Activated CD8-positive, alpha-beta memory T cell treated with anti-CD3 and anti-CD28 coated beads, Interleukin-2, amount 10 ng/mL, durations not matched to agents 7 days and 5 days (primary cell): ENCODE measurements at regions of chr12 and their contacts with region 1.

Region 1: DNA sequence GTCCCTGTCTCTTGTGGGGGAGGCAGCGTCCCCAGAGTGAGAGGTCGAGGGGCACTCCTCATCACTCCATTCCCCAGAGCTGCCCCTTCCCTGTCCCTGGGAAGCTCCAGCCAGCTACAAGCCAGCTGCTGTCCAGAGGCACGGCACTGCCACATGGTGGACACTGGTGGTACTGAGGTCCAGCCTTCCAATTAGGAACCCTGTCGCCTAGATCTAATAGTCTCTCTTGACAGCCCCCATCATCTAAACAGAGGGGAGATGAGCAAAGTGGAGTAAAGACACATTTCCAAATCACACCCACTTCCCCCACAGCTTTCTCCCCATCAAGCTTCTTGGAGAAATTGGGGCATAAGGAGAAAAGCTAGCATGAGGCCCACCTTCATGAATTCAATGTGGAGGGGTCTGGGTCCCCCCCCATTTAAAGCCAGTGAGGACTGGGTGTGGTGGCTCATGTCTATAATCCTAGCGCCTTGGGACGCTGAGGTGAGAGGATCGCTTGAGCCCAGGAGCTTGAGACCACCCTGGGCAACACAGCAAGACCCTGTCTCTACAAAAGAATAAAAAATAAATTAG is 2.1 kb upstream of the INHBE start:
- DNase-seq: peak; percentile 75
- ATAC-seq: peak; percentile 69
- H3K4me3 Mint-ChIP-seq: no peak overlapping the region
- H3K27ac Mint-ChIP-seq: no peak overlapping the region
- H3K4me1 Mint-ChIP-seq: peaks cover 17% of the 10 kb centered on the region
- H3K27me3 Mint-ChIP-seq: no peaks in the 10 kb centered on the region

Region 2: DNA sequence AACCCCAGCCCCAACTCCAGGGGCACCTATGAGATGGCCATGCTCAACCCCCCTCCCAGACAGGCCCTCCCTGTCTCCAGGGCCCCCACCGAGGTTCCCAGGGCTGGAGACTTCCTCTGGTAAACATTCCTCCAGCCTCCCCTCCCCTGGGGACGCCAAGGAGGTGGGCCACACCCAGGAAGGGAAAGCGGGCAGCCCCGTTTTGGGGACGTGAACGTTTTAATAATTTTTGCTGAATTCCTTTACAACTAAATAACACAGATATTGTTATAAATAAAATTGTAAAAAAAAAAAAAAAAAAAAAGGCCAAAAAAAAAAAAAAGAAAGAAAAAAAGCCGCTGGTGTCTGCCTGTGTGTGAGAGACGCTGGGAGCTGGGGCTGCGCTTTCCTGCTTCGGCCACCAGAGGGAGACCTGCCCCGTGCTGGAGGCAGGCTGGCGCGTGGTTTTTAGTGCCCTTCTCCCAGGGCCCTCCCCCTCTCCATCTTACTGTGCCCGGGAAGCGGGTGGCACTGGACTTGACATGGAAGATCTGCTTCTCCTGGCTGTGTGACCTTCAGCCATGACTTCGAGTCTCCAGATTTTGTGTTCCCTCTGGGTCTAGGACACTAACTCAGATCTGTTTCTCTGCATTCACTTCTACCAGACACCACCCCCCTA is 239.8 kb before region 1 on chr12:
- CTCF ChIA-PET with region 1: interaction called, 17 read pairs
- DNase-seq: peak; percentile 89
- ATAC-seq: peak; percentile 57
- H3K4me3 Mint-ChIP-seq: no peak overlapping the region
- H3K27ac Mint-ChIP-seq: no peak overlapping the region
- H3K4me1 Mint-ChIP-seq: peaks cover 30% of the 10 kb centered on the region
- H3K27me3 Mint-ChIP-seq: peaks cover 41% of the 10 kb centered on the region

Region 3: GRCh38 chr12:57261428-57261865 is 191.6 kb before region 1 on chr12:
- CTCF ChIA-PET with region 1: interaction called, 87 read pairs
- DNase-seq: no peak
- ATAC-seq: no peak
- H3K4me3 Mint-ChIP-seq: no peak overlapping the region
- H3K27ac Mint-ChIP-seq: no peak overlapping the region
- H3K4me1 Mint-ChIP-seq: peaks cover 8% of the 10 kb centered on the region
- H3K27me3 Mint-ChIP-seq: no peaks in the 10 kb centered on the region

Region 4: DNA sequence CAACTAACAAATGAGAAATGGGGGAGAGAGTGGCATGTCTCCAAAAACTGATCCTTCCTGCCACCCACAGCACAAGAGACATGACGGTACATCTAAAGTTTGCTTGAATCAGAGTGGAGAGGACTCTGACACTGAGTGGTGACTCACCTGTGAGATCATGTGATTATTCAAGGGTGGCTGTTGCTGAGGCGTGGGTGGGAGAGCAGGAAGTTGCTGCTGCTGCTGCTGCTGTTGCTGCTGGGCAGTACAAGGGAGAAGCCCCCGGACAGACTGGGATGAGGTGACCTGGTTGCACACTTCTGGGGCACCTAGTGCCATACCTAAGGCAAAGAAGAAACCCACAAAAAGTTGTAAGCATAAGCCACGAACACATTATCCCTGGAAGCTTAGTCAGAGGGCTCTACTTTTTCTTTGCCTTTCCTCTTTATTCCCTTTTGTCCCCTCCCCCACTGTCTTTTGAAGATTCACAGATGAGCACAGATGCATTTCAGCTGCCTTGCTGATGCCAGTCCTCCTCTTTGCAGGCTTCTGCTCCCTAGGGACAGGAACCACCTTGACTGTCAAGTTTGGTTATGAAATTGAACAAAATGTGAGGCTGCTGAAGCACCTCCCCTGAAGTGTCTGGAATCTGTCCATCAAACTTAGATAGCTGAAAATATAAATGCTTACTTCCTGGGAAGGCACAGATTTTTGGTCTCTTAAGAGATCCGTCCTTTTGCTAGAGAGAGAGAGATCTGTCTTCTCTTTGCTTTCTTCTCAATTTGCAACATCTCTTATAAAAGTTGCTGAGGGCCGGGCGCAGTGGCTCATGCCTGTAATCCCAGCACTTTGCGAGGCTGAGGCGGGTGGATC is 172.6 kb before region 1 on chr12:
- CTCF ChIA-PET with region 1: interaction called, 10 read pairs
- DNase-seq: peak; percentile 87
- ATAC-seq: peak; percentile 100
- H3K4me3 Mint-ChIP-seq: peak overlapping the region; percentile 14
- H3K27ac Mint-ChIP-seq: peak overlapping the region; percentile 93
- H3K4me1 Mint-ChIP-seq: peaks cover 17% of the 10 kb centered on the region
- H3K27me3 Mint-ChIP-seq: no peaks in the 10 kb centered on the region

Region 5: GRCh38 chr12:57309420-57309819 is 143.6 kb before region 1 on chr12:
- CTCF ChIA-PET with region 1: interaction called, 91 read pairs
- DNase-seq: no peak
- ATAC-seq: peak; percentile 36
- H3K4me3 Mint-ChIP-seq: no peak overlapping the region
- H3K27ac Mint-ChIP-seq: peak overlapping the region; percentile 14
- H3K4me1 Mint-ChIP-seq: peaks cover 13% of the 10 kb centered on the region
- H3K27me3 Mint-ChIP-seq: no peaks in the 10 kb centered on the region

Region 6: DNA sequence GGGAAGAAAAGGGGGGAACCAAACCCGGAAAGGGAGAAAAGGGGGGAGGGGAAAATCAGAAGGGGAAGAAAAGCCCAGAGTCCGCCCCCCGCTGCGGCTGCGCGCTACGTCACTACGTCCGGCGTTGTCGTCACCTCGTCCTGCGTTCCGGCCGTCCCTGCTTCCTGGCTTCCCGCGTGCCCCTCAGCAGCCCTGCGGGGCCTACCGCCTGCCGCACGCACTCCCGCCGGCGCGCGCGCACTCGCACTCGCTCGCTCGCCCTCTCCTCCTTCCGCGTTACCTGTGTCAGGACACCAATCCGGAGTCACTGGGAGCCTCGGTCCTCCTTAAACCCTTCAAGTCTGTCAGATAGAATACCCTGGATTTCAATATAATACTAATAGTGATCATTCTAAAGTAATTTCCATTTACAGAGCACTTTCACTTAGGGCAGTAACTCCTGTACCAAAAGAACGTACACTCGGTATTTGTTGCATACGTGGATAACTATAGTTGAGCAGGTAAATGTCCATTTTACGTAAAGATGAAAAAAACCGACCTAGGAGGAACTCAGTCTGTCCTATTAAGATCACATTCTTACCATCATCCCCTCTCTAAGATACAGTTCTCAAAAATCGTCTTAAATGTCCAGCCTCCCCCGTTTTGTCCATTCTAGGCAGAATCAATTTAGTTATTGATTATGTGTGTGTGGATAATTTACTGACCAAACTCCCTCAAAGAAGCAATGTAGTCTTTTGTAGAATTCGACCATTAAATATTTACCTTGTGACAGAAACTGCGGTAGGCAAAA is 21.9 kb before region 1 on chr12 and contains the start of gene R3HDM2:
- CTCF ChIA-PET with region 1: interaction called, 40 read pairs
- DNase-seq: peak; percentile 97
- ATAC-seq: peak; percentile 94
- H3K4me3 Mint-ChIP-seq: peak within 1 kb of the TSS; percentile 89
- H3K27ac Mint-ChIP-seq: peak within 1 kb of the TSS; percentile 98
- H3K4me1 Mint-ChIP-seq: peaks cover 43% of the 10 kb centered on the region
- H3K27me3 Mint-ChIP-seq: no peaks in the 10 kb centered on the region
- total RNA-seq, gene R3HDM2: 53.8 to 82.4 TPM

Region 7: DNA sequence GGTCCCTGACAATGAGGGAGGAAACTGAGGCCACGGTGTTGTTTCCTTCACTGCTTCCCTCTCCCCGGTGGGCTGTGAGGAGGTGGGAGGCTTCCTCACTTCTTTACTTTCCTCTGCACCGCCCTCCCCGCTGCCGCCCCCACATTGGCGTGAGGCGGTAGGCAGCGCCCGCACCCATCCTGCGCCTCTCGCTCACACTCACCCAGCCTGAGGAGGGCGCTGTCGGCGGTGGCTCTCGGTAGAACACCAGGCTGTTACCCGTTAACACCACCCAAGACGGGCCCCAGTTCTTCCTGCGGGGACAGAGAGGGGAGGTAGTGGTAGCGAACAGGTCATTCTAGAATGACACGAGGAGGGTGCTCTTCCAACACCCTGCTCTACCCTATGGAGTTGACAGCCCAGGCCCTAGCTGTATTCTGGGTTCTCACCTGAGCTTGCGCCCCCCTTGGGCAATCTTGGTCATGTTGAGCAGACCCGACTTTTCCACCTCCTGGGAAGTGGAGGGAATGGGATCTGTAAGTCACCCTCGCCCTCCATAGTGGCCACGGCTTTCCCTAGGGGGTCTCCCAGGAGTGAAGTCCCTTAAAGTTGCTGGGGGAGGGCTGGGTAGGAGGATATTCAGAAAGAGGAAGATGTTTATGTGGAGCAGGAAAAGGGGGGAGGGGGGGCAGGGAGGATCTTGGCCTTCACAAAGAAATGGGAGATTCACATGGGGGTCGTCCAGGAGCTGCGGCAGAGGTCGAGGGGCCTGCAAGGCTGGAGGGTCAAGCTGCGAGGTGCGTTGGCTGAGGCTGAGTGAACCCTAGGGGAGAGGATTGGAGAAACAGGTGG is 23.4 kb after region 1 on chr12:
- CTCF ChIA-PET with region 1: interaction called, 193 read pairs
- DNase-seq: peak; percentile 89
- ATAC-seq: peak; percentile 25
- H3K4me3 Mint-ChIP-seq: peak overlapping the region; percentile 89
- H3K27ac Mint-ChIP-seq: peak overlapping the region; percentile 100
- H3K4me1 Mint-ChIP-seq: peaks cover 62% of the 10 kb centered on the region
- H3K27me3 Mint-ChIP-seq: no peaks in the 10 kb centered on the region

Region 8: DNA sequence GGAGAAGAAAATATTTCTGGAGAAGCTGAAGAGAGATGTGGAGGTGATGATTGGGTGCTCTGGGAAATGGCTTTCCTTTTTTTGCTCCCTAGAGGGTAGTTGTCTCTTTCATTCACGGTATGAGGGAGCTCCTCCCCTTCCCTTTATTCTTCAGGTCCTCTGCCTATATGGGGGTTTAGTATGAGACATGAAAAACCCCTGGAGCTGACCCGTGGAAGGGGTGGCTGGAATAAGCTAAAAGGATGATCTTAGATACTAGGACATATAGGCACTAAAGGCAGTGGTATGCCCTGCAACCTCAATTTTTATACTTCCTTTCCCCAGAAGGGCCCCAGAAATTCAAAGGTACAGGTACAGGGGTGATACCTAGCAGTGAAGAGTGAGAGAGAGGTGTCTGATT is 147.4 kb after region 1 on chr12:
- CTCF ChIA-PET with region 1: no interaction called
- DNase-seq: no peak
- ATAC-seq: no peak
- H3K4me3 Mint-ChIP-seq: no peak overlapping the region
- H3K27ac Mint-ChIP-seq: no peak overlapping the region
- H3K4me1 Mint-ChIP-seq: peaks cover 12% of the 10 kb centered on the region
- H3K27me3 Mint-ChIP-seq: no peaks in the 10 kb centered on the region